ENCODE measurements at regions of chr9 and their contacts with region 1.

Region 1: DNA sequence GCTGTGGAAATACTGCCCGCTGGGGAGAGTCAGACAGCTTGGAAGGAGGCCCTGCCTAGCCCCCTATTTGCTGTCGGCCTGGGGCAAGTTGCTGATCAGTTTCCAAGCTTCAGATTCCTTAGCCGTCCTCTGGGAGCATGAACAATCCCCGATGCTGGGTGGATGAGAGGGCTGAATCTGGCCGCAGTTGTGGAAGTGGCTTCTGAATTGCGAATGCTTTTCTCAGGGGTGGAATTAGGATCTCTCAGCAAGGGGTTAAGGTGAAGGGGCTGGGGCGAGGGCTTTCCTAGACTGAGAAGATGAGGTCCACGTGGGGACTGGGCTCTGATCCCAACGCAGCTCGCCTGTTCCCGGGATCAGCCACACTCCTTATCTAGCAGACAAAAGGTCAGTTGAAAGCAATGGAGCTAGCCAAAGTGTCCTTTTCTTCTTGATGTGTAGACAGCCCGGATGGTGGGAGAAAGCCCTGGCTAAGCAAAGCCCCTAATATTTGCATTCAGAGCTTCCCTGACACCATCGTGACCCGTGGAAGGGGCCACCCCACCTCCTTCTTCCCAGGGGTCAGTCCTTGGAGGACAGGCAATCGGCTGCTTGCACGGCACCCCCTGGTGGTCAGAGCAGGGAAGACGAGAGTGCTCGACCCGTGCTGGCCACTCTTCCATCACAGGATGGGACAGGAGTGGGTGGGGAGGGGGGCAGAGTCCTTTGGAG is 54.9 kb downstream of the COL15A1 start:
- DNase-seq: peak; percentile 71 to 74
- H3K4me3 ChIP-seq: no peak overlapping the region
- H3K27ac ChIP-seq: peak overlapping the region in 1 of 3 donors; percentile 0
- H3K4me1 ChIP-seq: peaks cover 14 to 41% of the 10 kb centered on the region in 2 donors
- H3K27me3 ChIP-seq: no peaks in the 10 kb centered on the region
- CTCF ChIP-seq: peak; percentile 64 to 85 (median 74)
- POLR2A ChIP-seq: no peak

Region 2: GRCh38 chr9:98860871-98861293 is 137.7 kb before region 1 on chr9:
- intact Hi-C with region 1: loop called (anchors 5 kb)
- DNase-seq: peak in 1 of 2 donors; percentile 11
- H3K4me3 ChIP-seq: no peak overlapping the region
- H3K27ac ChIP-seq: no peak overlapping the region
- H3K4me1 ChIP-seq: peaks cover 0 to 11% of the 10 kb centered on the region in 2 donors
- H3K27me3 ChIP-seq: no peaks in the 10 kb centered on the region
- CTCF ChIP-seq: peak in 2 of 6 experiments; percentile 8 to 9
- POLR2A ChIP-seq: no peak

Region 3: GRCh38 chr9:99127376-99128132 is 129.0 kb after region 1 on chr9:
- intact Hi-C with region 1: loop called (anchors 10 kb)
- DNase-seq: no peak
- H3K4me3 ChIP-seq: no peak overlapping the region
- H3K27ac ChIP-seq: no peak overlapping the region
- H3K4me1 ChIP-seq: no peaks in the 10 kb centered on the region
- H3K27me3 ChIP-seq: no peaks in the 10 kb centered on the region
- CTCF ChIP-seq: no peak
- POLR2A ChIP-seq: no peak

Measured in thyroid gland (tissue), 4 donors.